Cardiac septum (tissue), 1 donor: ENCODE measurements at regions of chr16 and their contacts with region 1.

Region 1: GRCh38 chr16:4402439-4403132 is 13.8 kb downstream of the CORO7 start:
- DNase-seq: peak; percentile 93

Region 2: DNA sequence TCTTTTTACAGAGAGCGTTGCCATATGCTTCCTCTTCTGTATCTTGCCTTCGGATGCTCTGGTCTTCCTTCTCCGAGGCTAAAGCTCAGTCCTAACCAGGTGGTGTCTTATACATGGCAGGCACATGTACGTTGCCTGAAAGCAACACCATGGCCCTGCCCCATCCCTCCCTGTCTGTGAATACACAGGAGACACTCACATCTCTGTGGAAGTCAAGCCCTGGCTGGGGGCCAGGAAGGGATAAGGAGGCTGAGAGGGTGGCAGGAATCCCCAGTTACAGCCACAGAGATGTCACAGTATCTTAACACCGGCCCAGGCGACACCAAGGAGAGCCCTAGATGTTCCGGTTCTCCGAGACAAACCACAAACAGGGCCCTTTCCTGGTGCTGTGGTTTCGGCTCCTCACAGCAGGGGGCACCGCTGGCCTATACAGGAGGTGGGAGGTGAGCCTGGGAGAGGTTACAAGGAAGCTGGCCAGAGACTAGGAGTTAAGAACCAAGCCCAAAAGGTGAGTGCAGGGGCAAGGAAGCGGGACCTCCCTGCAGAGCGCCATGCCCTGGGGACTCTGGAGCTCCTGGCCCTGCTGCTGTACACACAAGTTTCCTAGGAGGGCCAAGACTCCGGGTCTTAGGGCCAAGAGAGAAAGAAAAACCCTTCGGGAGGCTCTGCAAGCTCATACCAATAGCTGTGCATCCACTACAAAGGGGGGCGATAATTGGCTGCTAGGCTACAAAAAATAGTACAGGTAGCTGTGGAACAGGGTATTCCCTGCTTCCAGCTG is 202.4 kb before region 1 on chr16:
- intact Hi-C with region 1: loop called (anchors 5 kb)
- DNase-seq: no peak

Region 3: GRCh38 chr16:4288148-4288921 is 114.3 kb before region 1 on chr16:
- intact Hi-C with region 1: loop called (anchors 2 kb)
- DNase-seq: peak; percentile 89

Region 4: DNA sequence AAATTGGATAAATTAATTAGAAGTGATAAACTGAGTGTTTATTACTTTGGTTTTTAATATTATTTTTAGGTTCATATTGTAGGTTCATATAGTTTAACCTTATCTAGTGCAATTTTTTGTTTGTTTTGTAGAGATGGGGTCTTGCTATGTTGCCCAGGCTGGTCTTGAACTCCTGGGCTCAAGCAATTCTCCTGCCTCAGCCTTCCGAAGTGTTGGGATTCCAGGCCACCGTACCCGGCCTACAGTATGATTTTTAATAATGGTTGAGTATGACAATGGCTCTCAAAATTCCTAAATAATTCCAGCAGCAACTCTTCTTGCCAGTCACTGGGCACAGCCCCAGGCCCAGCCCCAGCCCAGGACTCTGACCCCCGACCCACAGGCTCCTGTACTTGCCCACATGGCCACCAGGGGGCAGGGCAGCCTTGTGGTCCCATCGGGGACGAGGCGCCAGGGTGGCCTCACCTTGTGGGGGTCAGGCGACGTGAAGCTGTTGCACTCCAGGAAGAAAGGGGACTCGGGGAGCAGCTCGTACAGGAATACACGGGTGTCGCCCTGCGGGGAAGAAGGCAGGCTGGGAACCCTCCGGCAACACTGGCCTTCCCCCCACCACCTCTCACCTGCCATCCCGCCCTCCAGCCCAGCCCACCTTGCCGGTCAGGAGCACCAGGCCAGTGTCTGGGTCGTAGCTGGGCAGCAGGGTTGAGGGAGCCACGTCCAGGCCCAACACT is 43.6 kb before region 1 on chr16:
- intact Hi-C with region 1: loop called (anchors 1 kb)
- DNase-seq: peak; percentile 83